ENCODE measurements at regions of chr12 and their contacts with region 1.

Region 1: DNA sequence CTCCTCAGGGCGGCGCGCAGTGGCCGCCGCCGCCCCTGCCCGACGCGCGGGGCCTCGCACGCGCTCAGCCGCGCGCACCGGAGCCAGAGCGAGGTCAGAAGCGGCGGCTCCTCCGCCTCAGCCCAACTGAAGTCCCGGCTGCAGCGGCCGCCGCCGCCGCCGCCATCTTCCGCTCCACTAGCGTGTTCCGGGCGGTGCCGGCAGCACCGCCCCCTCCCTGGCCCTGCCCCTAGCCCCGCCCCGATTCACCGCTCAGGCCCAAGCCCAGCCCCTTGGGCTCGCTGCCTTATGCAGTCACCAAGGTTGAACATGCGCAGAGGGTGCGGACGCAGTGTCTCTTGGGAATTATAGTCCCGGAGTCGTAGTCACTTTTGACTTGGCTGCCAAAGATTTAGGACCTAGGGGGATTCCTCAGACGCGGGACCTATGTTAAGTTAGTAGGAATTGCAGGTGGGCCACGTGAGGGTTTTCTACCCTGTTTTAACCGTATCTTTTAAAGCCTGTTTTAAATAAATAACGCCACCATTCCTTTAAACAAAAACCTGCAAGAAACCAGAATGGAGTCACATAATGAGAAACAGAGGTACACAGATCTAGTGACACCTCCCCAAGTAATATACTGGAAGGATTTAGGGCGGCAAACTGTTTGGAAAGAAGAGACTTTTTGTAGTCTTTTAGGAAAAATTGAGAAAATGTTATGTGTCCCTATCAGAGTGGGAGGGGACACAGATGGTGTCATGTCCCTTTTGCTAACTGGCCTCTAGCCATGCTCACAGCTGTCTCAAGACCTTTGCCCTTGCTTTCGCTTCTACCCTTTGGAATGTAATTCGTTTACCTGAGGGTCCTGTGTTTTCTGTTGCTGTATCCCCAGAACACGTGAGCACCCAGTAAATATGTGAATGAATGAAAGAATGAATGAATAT is at the start of gene PPTC7:
- DNase-seq: peak; percentile 97 to 98
- H3K4me3 ChIP-seq: peak within 1 kb of the TSS; percentile 68 to 72
- H3K27ac ChIP-seq: peak within 1 kb of the TSS; percentile 83 to 84
- H3K4me1 ChIP-seq: peaks cover 0 to 57% (median 42%) of the 10 kb centered on the region in 4 donors
- H3K27me3 ChIP-seq: no peaks in the 10 kb centered on the region
- CTCF ChIP-seq: no peak

Region 2: GRCh38 chr12:110543252-110543959 is 40.0 kb before region 1 on chr12:
- intact Hi-C with region 1: loop called (anchors 5 kb)
- DNase-seq: peak; percentile 97
- H3K4me3 ChIP-seq: peak overlapping the region in 1 of 2 donors; percentile 4
- H3K27ac ChIP-seq: peak overlapping the region; percentile 78 to 87
- H3K4me1 ChIP-seq: peaks cover 0 to 65% (median 44%) of the 10 kb centered on the region in 4 donors
- H3K27me3 ChIP-seq: no peaks in the 10 kb centered on the region
- CTCF ChIP-seq: no peak

Region 3: DNA sequence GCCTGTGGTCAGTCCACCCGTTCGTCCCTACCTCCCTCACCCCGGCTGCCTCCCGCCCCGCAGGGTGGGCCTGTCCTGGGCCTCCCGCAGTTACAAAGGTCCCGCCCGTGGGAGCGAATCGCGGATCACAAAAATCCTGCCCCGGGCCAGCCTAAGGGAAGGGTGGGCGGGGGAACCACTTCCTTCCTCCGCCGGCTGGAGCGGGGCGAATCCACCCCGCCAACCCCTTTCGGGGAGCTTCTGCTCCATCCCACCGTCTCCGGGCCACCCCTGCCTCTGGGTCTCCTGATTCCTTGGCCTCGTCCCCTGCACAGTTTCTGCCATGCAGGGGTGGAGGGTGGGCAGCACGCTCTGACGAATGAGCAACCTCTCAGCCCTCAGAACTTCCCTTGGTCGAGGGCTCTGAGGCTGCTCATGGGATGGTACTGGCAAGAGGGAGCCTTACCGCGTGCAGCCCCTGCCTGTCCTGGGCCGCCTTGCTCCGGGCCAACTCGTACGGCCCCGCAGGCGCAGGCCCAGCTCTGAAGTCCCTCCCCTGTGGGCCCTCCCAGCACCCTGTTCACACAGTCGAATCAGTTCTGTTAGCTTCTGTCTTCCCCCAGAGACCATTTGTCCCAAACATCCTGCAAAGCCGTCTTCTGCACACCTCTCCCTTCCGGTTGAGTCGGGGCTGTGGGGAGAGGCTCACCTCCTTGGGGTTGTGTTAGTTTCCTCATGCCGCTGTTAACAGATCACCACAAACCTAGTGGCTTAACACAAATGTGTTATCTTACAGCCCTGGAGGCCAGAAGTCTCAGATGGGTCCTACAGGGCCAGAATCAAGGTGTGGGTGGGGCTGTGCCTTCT is 106.1 kb after region 1 on chr12:
- intact Hi-C with region 1: no loop called
- DNase-seq: peak; percentile 60 to 79
- H3K4me3 ChIP-seq: peak overlapping the region; percentile 70 to 72
- H3K27ac ChIP-seq: peak overlapping the region; percentile 78 to 80
- H3K4me1 ChIP-seq: peaks cover 0 to 24% (median 14%) of the 10 kb centered on the region in 4 donors
- H3K27me3 ChIP-seq: no peaks in the 10 kb centered on the region
- CTCF ChIP-seq: no peak

Measured in tibial artery (tissue), 4 donors.